GM12878 (cell line): ENCODE measurements at regions of chr12 and their contacts with region 1.

Region 1: GRCh38 chr12:12611512-12612306 is at the start of gene CREBL2:
- DNase-seq: peak; percentile 80
- ATAC-seq: peak; percentile 82
- H3K4me3 ChIP-seq: peak within 1 kb of the TSS; percentile 86
- H3K27ac ChIP-seq: peak within 1 kb of the TSS; percentile 94
- H3K4me1 ChIP-seq: peaks cover 17% of the 10 kb centered on the region
- H3K27me3 ChIP-seq: no peaks in the 10 kb centered on the region
- CTCF ChIP-seq: no peak
- EP300 ChIP-seq: no peak
- POLR2A ChIP-seq: peak; percentile 92
- RAD21 ChIP-seq: no peak
- polyA plus RNA-seq, gene CREBL2: 4.6 to 5.2 TPM

Region 2: DNA sequence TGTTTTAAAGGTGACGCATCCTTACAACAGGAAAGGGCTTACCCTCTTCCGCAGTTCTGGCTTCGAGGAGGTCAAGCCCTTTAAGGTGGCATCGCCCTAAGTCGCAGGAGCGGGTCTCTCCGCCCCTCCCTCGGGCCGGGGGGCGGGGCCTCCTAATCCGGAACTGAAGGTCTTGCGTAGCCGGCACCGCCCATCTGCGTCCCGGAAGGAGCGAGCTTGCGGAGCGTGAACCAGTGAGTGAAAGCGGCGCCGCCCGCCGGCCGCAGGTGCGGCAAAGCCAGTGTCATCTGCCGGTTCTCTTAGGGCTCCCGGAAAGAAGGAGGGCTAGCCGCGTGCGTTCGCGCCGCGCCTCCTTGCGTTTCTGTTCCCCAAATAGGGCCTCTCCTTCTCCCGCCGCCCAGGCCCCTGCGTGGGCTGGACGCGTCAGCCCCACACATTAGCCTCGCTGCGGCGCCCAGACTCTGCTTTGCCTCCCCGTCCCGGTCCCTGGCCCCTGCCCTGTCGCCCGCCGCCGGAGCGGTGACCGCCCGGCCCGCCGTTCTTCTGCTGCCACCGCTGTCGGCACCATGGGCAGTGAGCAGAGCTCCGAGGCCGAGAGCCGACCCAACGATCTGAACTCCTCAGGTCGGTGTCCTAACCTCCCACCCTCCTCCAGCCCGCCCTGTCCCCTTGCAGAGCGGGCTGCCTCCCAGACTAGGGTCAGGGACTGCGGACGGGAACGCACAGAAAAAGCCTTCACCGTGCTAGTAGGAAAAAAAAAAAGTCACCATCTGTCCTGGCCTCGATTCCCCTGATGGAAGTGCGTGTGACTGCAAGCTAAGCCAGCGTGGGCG is 254.6 kb before region 1 on chr12 and contains the start of gene BORCS5:
- CTCF ChIA-PET with region 1: interaction called, 5 read pairs
- POLR2A ChIA-PET with region 1: interaction called, 3 read pairs
- RAD21 ChIA-PET with region 1: interaction called, 25 read pairs
- SMC1A ChIA-PET with region 1: interaction called, 3 read pairs
- in situ Hi-C with region 1: no loop called
- intact Hi-C with region 1: no loop called
- DNase-seq: peak; percentile 94
- ATAC-seq: peak; percentile 92
- H3K4me3 ChIP-seq: peak within 1 kb of the TSS; percentile 71
- H3K27ac ChIP-seq: peak within 1 kb of the TSS; percentile 97
- H3K4me1 ChIP-seq: no peaks in the 10 kb centered on the region
- H3K27me3 ChIP-seq: no peaks in the 10 kb centered on the region
- CTCF ChIP-seq: peak; percentile 2 to 35 (median 24); a peak in 3 of 6 replicates
- EP300 ChIP-seq: peak in 1 of 2 experiments; percentile 59; a peak in 2 of 4 replicates
- POLR2A ChIP-seq: peak; percentile 96
- RAD21 ChIP-seq: no peak
- polyA plus RNA-seq, gene BORCS5: 1.4 to 1.7 TPM

Region 3: DNA sequence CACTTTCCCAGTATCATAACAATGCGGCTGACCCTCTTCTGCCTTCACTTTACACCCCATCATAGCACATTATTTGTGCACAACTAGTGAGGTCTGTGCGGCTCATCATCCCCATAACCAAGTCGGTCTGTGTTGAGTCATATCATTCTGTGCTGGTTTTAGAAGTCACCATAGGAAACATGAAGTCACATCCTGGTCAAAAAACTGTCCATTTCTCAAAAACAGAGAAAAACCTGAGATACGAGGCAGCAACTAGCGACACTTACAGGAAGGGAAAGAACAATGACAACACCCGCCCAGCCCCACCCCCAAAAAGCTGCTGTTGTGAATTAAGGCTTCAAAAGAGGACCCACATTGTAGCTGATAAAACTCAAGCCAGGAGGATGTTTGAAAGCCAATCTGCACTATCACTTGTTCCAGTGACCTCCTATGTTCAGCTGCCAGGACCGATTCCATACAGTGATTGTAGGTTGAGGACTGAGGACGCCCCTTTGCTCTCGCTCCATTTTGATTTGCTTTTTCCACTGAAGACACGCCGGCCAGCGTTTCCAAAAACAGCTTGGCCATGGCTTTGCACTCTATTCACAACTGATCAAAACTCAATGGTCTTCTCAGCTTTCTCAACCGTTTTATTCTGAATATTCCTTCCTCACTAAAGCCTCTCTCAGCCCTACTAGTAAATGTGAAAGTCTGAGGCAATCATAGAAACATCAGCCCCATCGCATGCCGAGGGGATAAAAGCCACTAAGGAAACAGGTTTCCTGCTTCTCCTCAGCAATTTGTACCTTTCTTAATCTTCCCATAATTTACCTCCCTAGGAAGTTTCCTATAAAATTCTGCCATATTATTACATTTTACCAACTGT is 136.5 kb before region 1 on chr12:
- CTCF ChIA-PET with region 1: interaction called, 8 read pairs
- POLR2A ChIA-PET with region 1: no interaction called
- RAD21 ChIA-PET with region 1: interaction called, 16 read pairs
- SMC1A ChIA-PET with region 1: interaction called, 10 read pairs
- in situ Hi-C with region 1: no loop called
- intact Hi-C with region 1: loop called (anchors 5 kb)
- DNase-seq: peak; percentile 87
- ATAC-seq: peak; percentile 98
- H3K4me3 ChIP-seq: 0 out of 2 replicates have a peak overlapping the region, but pooled peaks have one; percentile 30
- H3K27ac ChIP-seq: peak overlapping the region; percentile 94
- H3K4me1 ChIP-seq: peaks cover 24% of the 10 kb centered on the region
- H3K27me3 ChIP-seq: no peaks in the 10 kb centered on the region
- CTCF ChIP-seq: peak in 1 of 3 experiments; percentile 19; a peak in 1 of 6 replicates
- EP300 ChIP-seq: peak; percentile 82 to 88; a peak in 3 of 4 replicates
- POLR2A ChIP-seq: no peak
- RAD21 ChIP-seq: peak; percentile 61

Region 4: DNA sequence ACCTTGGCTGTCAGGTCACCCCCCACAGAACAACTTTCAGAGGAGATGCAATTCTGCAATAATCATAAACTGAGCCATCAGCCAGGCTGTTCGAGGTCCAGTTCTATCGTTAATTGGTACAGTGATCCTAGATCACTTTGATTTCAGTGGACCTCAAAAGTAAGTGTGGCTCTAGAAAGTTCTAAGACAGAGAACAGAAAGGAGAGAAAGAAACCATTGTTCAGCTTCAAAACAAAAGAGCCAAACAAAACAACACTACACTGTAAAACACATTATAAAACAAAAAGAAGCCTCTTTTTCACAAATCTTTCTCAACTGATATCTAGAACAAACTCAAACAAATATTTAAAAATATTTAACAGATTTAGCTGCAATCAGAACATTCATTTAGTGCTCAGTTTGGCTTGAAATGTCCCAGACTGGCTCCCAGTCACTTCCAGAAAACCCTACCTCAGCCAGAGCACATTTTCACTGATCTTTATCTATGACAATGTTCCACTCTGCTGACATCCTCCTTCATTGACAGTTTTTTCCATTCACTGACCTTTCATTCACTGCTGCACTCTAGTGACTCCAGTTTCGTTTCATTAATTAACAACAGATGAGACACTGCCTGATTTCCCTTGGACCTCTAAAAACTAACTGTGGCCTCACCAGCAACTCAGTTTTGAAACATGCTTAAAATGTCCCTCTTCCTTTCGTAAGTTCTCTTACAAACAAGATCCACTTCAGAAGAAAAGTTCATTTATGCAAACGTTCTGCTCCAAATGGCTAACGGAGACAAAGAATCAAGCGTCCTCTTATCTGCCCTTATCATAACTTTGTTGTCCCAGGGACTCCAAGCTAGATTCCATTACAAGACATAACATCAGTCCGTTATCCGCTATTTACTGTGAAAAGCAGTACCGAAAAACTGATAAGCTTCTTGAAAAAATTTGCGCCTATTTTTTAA is 105.9 kb before region 1 on chr12:
- CTCF ChIA-PET with region 1: interaction called, 24 read pairs
- POLR2A ChIA-PET with region 1: interaction called, 9 read pairs
- RAD21 ChIA-PET with region 1: interaction called, 47 read pairs
- SMC1A ChIA-PET with region 1: interaction called, 23 read pairs
- in situ Hi-C with region 1: no loop called
- intact Hi-C with region 1: loop called (anchors 1 kb)
- DNase-seq: peak; percentile 94
- ATAC-seq: peak; percentile 87
- H3K4me3 ChIP-seq: peak overlapping the region; percentile 30
- H3K27ac ChIP-seq: peak overlapping the region; percentile 80
- H3K4me1 ChIP-seq: peaks cover 36% of the 10 kb centered on the region
- H3K27me3 ChIP-seq: no peaks in the 10 kb centered on the region
- CTCF ChIP-seq: no peak
- EP300 ChIP-seq: peak; percentile 92
- POLR2A ChIP-seq: no peak
- RAD21 ChIP-seq: peak; percentile 19; the same call in 1 of the 2 replicates

Region 5: GRCh38 chr12:12582895-12583303 is 28.8 kb before region 1 on chr12:
- CTCF ChIA-PET with region 1: interaction called, 11 read pairs
- POLR2A ChIA-PET with region 1: interaction called, 12 read pairs
- RAD21 ChIA-PET with region 1: interaction called, 76 read pairs
- SMC1A ChIA-PET with region 1: interaction called, 46 read pairs
- in situ Hi-C with region 1: no loop called
- intact Hi-C with region 1: loop called (anchors 1 kb)
- DNase-seq: peak; percentile 100
- ATAC-seq: peak; percentile 92
- H3K4me3 ChIP-seq: no peak overlapping the region
- H3K27ac ChIP-seq: peak overlapping the region; percentile 94
- H3K4me1 ChIP-seq: peaks cover 44% of the 10 kb centered on the region
- H3K27me3 ChIP-seq: no peaks in the 10 kb centered on the region
- CTCF ChIP-seq: no peak
- EP300 ChIP-seq: peak; percentile 96 to 99
- POLR2A ChIP-seq: peak; percentile 36; the same call in 1 of the 2 replicates
- RAD21 ChIP-seq: 0 out of 2 replicates have a peak, but pooled peaks have one; percentile 17

Region 6: GRCh38 chr12:12654691-12655460 is 43.2 kb after region 1 on chr12:
- CTCF ChIA-PET with region 1: interaction called, 11 read pairs
- POLR2A ChIA-PET with region 1: interaction called, 3 read pairs
- RAD21 ChIA-PET with region 1: interaction called, 7 read pairs
- SMC1A ChIA-PET with region 1: interaction called, 10 read pairs
- in situ Hi-C with region 1: no loop called
- intact Hi-C with region 1: loop called (anchors 2 kb)
- DNase-seq: no peak
- ATAC-seq: 0 out of 3 replicates have a peak, but pooled peaks have one; percentile 8
- H3K4me3 ChIP-seq: no peak overlapping the region
- H3K27ac ChIP-seq: no peak overlapping the region
- H3K4me1 ChIP-seq: no peaks in the 10 kb centered on the region; the same call in 1 of the 2 replicates
- H3K27me3 ChIP-seq: no peaks in the 10 kb centered on the region
- CTCF ChIP-seq: no peak
- EP300 ChIP-seq: no peak
- POLR2A ChIP-seq: no peak
- RAD21 ChIP-seq: no peak

Region 7: GRCh38 chr12:12704593-12705230 is 93.0 kb after region 1 on chr12:
- CTCF ChIA-PET with region 1: interaction called, 12 read pairs
- POLR2A ChIA-PET with region 1: interaction called, 3 read pairs
- RAD21 ChIA-PET with region 1: interaction called, 5 read pairs
- SMC1A ChIA-PET with region 1: interaction called, 5 read pairs
- in situ Hi-C with region 1: no loop called
- intact Hi-C with region 1: no loop called
- DNase-seq: no peak
- ATAC-seq: peak; percentile 89
- H3K4me3 ChIP-seq: no peak overlapping the region
- H3K27ac ChIP-seq: no peak overlapping the region
- H3K4me1 ChIP-seq: peaks cover 18% of the 10 kb centered on the region
- H3K27me3 ChIP-seq: no peaks in the 10 kb centered on the region
- CTCF ChIP-seq: peak; percentile 69 to 97 (median 93); a peak in 5 of 6 replicates
- EP300 ChIP-seq: no peak
- POLR2A ChIP-seq: no peak
- RAD21 ChIP-seq: peak; percentile 99

Region 8: GRCh38 chr12:12819671-12820311 is 208.1 kb after region 1 on chr12:
- CTCF ChIA-PET with region 1: no interaction called
- POLR2A ChIA-PET with region 1: no interaction called
- RAD21 ChIA-PET with region 1: no interaction called
- SMC1A ChIA-PET with region 1: no interaction called
- in situ Hi-C with region 1: no loop called
- intact Hi-C with region 1: no loop called
- DNase-seq: no peak
- ATAC-seq: peak; percentile 6; the same call in 1 of the 3 replicates
- H3K4me3 ChIP-seq: no peak overlapping the region
- H3K27ac ChIP-seq: peak overlapping the region; percentile 70
- H3K4me1 ChIP-seq: peaks cover 23% of the 10 kb centered on the region
- H3K27me3 ChIP-seq: no peaks in the 10 kb centered on the region
- CTCF ChIP-seq: no peak
- EP300 ChIP-seq: no peak
- POLR2A ChIP-seq: no peak
- RAD21 ChIP-seq: no peak

Region 9: DNA sequence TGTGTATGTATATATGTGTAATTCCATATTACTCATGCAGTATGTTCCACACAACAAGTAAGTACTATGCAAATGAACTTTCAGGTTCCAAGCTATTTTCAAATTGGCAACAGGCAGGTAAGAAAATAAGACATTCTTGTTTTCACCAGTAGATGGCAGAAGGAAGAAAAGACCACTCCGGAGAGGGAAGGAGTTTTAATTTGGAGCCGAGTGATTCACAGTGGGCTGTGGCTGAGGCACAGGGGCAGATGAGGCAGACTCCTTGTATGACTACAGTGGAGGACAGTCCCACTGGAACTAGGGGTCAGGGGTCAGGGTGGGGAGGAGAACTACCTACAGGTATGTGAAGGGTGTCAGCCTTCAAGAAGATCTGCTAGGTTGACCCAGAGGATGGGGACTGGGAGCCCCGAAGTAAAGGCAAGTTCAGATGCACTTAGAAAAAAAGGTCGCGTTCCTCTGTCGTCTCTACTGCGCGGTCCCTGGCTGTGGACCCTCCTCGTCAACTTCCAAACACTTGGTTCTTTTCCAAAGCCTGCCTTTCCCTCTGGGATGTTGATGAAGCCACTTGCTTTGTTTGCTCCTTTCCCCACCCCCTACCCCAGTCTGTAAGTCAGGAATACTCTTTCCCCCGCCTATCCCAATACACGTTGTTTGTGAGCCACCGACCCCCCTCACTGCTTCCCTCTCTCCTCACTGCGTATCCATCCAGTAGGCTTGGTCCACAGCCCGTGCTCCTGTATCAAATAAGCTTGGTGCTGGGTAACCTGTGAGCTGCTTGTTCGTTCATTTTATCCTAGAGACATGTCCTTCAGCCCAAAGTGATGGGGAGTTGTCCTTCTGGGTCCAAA is 225.5 kb after region 1 on chr12:
- CTCF ChIA-PET with region 1: no interaction called
- POLR2A ChIA-PET with region 1: no interaction called
- RAD21 ChIA-PET with region 1: no interaction called
- SMC1A ChIA-PET with region 1: no interaction called
- in situ Hi-C with region 1: no loop called
- intact Hi-C with region 1: no loop called
- DNase-seq: no peak
- ATAC-seq: peak; percentile 77
- H3K4me3 ChIP-seq: no peak overlapping the region
- H3K27ac ChIP-seq: no peak overlapping the region
- H3K4me1 ChIP-seq: no peaks in the 10 kb centered on the region; the same call in 1 of the 2 replicates
- H3K27me3 ChIP-seq: no peaks in the 10 kb centered on the region
- CTCF ChIP-seq: peak; percentile 37 to 52 (median 43); a peak in 5 of 6 replicates
- EP300 ChIP-seq: no peak
- POLR2A ChIP-seq: no peak
- RAD21 ChIP-seq: peak; percentile 35; the same call in 1 of the 2 replicates